Calu3 (cell line): ENCODE measurements at regions of chr1 and their contacts with region 1.

Region 1: DNA sequence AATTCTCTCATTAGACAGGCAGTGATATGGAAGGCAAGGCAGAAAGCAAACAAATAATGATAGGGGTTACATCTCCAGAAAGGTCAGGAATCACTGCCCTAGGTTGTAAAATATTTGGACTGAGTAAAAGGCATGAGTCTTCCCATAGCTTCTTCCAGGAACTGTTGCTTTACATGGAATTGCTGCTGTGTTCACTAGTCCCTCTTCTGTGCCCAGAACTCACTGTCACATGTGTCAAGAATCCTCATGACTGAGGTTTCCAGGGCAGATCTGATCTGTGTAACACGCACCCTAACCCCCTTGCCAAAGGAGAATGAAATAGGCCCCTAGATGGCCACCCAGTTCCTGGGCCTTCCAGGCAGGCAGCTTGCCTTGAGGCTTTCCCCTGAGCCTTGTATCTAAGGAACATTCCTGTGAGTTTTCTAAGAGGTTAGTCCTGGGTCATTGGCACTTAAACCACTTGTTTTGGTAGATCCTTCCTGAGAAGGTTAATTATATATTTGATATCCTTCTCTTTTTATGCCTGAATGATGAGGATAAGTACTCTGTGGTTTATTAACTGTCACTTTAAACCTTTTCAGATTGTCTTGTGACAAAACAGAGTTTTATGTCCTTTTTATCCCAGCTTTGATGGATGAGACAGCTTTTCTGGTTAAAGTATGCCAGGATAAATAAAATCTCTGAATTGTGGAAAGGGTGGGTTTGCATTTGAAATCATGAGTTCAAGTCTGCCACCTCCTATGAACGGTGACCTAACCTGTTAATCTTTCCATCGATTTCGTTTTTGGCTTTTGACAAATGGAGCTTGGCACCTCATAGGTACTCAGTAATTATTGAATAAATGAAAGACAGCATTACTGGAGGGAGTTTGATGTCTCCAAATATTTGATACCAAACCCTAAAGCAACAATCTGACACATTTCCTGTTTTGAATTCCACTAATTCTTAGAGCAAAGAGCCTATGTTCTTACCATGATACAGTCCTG is 163.3 kb downstream of the DHRS3 start:
- DNase-seq: peak; percentile 50
- H3K4me3 Mint-ChIP-seq: no peak overlapping the region
- H3K27ac Mint-ChIP-seq: peak overlapping the region; percentile 83
- H3K4me1 Mint-ChIP-seq: peaks cover 39% of the 10 kb centered on the region
- H3K27me3 Mint-ChIP-seq: no peaks in the 10 kb centered on the region
- CTCF ChIP-seq: no peak

Region 2: GRCh38 chr1:12161662-12162458 is 292.8 kb before region 1 on chr1:
- CTCF ChIA-PET with region 1: no interaction called
- intact Hi-C with region 1: no loop called
- DNase-seq: peak; percentile 77
- H3K4me3 Mint-ChIP-seq: no peak overlapping the region
- H3K27ac Mint-ChIP-seq: no peak overlapping the region
- H3K4me1 Mint-ChIP-seq: peaks cover 49% of the 10 kb centered on the region
- H3K27me3 Mint-ChIP-seq: no peaks in the 10 kb centered on the region
- CTCF ChIP-seq: no peak

Region 3: DNA sequence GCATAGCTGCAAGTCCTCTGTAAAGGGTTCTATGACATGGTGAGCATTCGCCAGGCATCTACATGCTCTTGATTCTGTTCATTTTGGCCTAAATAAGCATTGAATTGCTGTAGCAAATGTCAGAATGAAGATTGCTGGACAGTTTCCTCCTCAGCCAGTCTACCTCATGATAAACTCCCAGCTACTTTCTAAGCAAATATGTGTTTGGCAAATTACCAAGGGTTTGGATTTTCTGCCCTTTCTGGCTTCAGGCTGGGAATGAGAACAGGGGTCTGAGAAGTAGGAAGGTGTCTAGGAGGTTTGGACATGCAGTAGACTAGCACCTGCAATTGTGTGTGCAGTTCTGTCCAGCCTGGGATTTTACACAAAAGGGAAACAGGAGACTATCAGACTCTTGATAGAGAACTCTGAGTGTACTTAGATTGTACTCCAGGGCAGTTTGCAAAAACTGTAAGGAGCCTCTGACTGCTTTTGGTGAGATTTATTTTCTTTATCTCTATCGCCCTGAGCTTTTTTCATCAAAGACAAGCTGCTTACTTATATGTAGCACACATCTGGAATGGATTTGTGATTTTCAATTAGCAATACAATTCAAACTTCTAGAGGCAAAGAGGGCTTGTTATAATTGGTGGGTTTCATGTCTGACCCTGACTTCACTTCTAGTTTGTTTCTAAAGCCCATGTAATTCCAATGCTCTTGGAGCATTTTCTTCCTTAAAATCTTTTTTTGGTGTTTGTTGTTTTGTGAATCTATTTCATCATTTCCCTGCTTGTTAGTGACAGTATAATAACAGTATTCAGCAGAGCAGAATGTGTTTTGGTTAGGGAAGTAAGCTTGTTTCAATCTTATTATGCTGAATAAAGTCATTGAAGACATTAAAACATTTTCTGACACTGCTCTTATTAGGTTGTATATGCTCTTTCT is 74.1 kb before region 1 on chr1:
- CTCF ChIA-PET with region 1: no interaction called
- intact Hi-C with region 1: loop called (anchors 1 kb)
- DNase-seq: no peak
- H3K4me3 Mint-ChIP-seq: peak overlapping the region; percentile 21
- H3K27ac Mint-ChIP-seq: peak overlapping the region; percentile 89
- H3K4me1 Mint-ChIP-seq: peaks cover 53% of the 10 kb centered on the region
- H3K27me3 Mint-ChIP-seq: no peaks in the 10 kb centered on the region
- CTCF ChIP-seq: no peak

Region 4: GRCh38 chr1:12434174-12434573 is 20.5 kb before region 1 on chr1:
- CTCF ChIA-PET with region 1: interaction called, 3 read pairs
- intact Hi-C with region 1: loop called (anchors 1 kb)
- DNase-seq: no peak
- H3K4me3 Mint-ChIP-seq: no peak overlapping the region
- H3K27ac Mint-ChIP-seq: peak overlapping the region; percentile 89
- H3K4me1 Mint-ChIP-seq: peaks cover 46% of the 10 kb centered on the region
- H3K27me3 Mint-ChIP-seq: no peaks in the 10 kb centered on the region
- CTCF ChIP-seq: no peak

Region 5: DNA sequence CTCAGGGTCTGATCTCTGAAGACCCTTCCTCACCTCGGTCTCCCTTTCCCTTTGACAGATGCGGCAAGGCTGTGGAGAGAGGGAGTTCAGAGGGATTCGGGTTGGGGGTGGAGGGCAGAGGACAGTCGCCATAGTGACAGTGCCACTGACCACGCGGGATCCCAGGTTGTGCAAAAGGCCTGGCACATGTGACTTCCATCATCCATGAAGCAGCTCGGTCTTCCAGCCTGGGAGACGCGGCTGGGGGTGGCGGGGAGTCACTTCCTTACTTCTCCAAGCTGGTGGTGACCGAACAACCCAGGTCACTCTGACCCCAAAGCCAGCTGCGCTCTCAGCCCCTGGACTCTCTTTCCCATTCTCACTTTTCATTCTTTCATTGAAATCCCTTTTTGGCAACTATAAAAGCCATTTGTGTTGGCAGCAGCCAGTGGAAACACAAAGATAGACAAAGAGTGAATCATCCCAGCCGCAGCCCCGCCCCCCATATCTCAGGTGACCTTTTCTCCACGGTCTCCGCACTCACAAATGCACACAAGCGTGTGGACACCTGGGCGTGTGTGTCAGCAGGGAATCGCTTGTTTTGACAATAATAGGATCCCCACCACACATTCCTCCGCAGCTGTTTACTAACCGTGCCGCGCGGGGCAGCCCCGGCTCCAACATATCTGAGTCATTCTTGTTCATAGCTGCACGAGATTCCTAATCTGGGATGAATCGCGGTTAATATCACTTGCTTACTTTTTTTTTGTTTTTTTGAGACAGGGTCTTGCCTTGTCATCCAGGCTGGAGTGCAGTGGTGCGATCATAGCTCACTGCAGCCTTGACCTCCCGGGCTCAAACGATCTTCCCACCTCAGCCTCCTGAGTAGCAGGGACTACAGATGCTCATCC is 95.0 kb after region 1 on chr1:
- CTCF ChIA-PET with region 1: no interaction called
- intact Hi-C with region 1: no loop called
- DNase-seq: peak; percentile 86
- H3K4me3 Mint-ChIP-seq: peak overlapping the region; percentile 37
- H3K27ac Mint-ChIP-seq: peak overlapping the region; percentile 94
- H3K4me1 Mint-ChIP-seq: peaks cover 25% of the 10 kb centered on the region
- H3K27me3 Mint-ChIP-seq: no peaks in the 10 kb centered on the region
- CTCF ChIP-seq: no peak